PC-9 (cell line): ENCODE measurements at regions of chr13 and their contacts with region 1.

Region 1: GRCh38 chr13:75458696-75459422 is 23.1 kb downstream of the TBC1D4 start:
- DNase-seq: no peak
- H3K4me3 ChIP-seq: no peak overlapping the region
- H3K27ac ChIP-seq: no peak overlapping the region
- H3K4me1 ChIP-seq: no peaks in the 10 kb centered on the region; the same call in 1 of the 2 replicates
- H3K27me3 ChIP-seq: no peaks in the 10 kb centered on the region
- CTCF ChIP-seq: no peak

Region 2: DNA sequence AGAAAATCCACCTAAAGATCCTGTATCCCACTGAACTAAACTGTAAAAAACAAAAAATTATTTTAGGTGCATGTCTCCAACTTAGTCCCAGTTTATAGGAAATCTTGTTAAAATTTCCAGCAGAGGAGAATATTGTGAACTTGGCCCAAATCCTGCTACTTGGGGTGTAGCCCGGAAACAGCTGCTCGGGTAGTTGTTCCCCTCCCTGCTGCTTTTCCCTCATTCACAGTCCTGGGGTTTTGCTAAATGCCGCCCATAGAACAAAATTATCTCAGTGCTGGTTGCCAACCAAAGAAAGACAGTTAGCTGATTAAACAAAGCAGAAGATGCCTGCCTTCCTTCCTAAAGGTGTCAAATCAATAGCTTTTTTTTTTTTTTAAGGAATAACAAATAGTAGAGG is 994.2 kb before region 1 on chr13:
- CTCF ChIA-PET with region 1: no interaction called
- POLR2A ChIA-PET with region 1: no interaction called
- intact Hi-C with region 1: no loop called
- DNase-seq: no peak
- H3K4me3 ChIP-seq: no peak overlapping the region
- H3K27ac ChIP-seq: no peak overlapping the region
- H3K4me1 ChIP-seq: no peaks in the 10 kb centered on the region
- H3K27me3 ChIP-seq: no peaks in the 10 kb centered on the region
- CTCF ChIP-seq: no peak

Region 3: DNA sequence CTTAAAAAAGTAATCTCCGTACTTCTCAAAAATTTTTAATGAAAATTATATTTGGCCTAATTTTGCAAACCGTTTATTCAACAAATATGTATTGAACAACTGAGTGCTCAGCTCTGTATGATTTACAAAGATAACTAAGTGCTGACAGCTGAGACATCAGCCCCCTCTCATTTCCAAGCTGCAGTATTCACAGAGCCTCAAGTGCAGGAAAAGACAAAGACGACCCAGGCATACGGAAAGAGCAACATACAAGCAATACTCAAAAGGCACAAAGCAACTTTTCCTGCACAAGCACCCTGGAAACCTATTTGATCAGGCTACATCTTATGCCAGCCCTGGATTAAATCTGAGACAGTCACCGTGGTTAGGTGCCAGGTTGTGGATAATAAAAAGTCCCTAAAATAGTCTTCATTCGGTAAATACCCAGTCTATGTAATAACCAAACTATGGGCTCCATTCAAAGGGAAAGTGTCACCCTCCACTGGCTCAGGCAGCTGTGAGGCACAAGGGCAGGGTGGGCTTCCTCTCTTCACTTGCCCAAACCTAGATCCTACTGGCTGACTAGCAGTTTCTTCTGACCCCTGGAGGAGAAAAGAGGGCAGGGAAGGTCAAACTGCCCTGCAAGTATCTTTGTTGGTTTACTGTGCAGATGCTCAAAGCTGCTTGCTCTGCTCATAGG is 42.4 kb before region 1 on chr13:
- CTCF ChIA-PET with region 1: no interaction called
- POLR2A ChIA-PET with region 1: interaction called, 13 read pairs
- intact Hi-C with region 1: no loop called
- DNase-seq: no peak
- H3K4me3 ChIP-seq: 0 out of 2 replicates have a peak overlapping the region, but pooled peaks have one; percentile 10
- H3K27ac ChIP-seq: peak overlapping the region; percentile 65; the same call in 1 of the 2 replicates
- H3K4me1 ChIP-seq: peaks cover 50% of the 10 kb centered on the region
- H3K27me3 ChIP-seq: no peaks in the 10 kb centered on the region
- CTCF ChIP-seq: no peak

Region 4: DNA sequence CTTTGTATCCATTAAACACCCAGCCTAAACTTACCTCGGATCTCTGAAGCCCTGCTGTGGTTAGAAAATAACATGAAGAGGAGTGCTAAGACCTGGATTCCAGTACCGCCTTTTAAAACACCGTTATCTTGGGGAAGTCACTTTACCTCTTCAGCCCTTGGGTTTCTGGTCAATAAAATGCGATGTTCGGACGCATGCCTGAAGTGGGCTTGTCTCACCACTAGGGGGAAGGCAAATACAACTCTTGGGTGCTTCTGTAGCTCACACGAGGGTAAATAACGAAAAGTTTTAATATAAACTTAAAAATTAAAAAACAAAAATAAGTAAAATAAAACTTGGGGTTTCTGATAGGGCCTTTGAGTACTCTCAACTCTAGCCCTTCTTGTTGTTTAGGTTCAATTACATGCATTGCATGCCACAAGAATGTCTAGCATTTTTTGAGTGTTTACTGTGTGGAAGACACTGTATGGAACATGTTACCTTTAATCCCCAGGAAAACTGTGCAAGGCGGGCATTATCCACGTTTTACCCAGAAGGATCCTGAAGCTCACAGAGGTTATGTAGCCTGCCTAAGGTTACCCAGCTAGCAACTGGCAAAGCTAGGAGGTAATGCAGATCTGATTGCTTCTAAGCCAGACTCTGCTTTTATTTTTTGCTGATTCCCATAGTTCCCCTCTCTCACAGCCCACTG is 417.6 kb after region 1 on chr13:
- CTCF ChIA-PET with region 1: no interaction called
- POLR2A ChIA-PET with region 1: no interaction called
- intact Hi-C with region 1: no loop called
- DNase-seq: peak; percentile 47 to 48
- H3K4me3 ChIP-seq: no peak overlapping the region
- H3K27ac ChIP-seq: no peak overlapping the region
- H3K4me1 ChIP-seq: no peaks in the 10 kb centered on the region
- H3K27me3 ChIP-seq: no peaks in the 10 kb centered on the region
- CTCF ChIP-seq: peak; percentile 95